ENCODE measurements at regions of chr1 and their contacts with region 1.

Region 1: DNA sequence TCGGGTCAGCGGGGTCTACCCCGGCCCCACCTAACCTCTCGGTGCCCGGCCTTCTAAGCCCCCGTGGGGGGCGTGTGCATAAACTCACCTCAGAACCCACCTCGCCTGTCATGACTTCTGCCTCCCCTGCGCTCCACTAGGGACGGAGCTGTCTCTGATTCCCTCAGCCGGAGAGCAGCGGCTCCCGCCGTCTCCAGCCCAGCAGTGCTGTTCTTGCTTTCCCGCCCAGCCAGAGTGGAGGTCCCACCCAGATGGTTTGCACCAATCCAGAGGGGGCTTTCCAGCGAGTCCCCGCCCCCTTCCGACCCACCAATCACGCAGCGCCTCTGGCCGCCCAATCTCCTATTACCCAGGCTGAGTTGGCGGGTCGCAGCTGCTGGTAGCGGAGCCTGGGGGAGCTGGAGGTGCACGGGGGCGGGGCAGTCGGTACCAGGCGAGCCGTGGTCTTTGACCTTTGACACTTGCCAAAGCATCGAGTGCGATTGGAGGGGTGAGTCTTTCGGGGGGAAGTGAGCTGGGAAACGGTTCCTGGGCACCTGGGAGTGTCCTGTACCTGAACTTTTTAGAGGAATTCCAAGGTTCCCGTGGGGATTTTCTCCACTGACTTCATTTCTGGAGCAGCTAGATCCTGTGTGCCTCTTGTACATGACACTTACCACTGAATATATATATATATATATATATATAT is at the start of gene CLSPN:
- DNase-seq: peak; percentile 87 to 96
- H3K4me3 ChIP-seq: peak within 1 kb of the TSS; percentile 60 to 93
- H3K27ac ChIP-seq: peak within 1 kb of the TSS; percentile 20 to 73
- H3K4me1 ChIP-seq: peaks cover 0 to 4% of the 10 kb centered on the region in 2 donors
- H3K27me3 ChIP-seq: no peaks in the 10 kb centered on the region
- CTCF ChIP-seq: no peak
- total RNA-seq, gene CLSPN: not detected

Region 2: GRCh38 chr1:35192853-35193664 is 576.8 kb before region 1 on chr1 and contains the start of gene SFPQ:
- intact Hi-C with region 1: loop called (anchors 10 kb)
- DNase-seq: peak; percentile 94 to 99
- H3K4me3 ChIP-seq: peak within 1 kb of the TSS; percentile 72 to 100
- H3K27ac ChIP-seq: peak within 1 kb of the TSS; percentile 99
- H3K4me1 ChIP-seq: peaks cover 5 to 22% of the 10 kb centered on the region in 2 donors
- H3K27me3 ChIP-seq: no peaks in the 10 kb centered on the region
- CTCF ChIP-seq: no peak
- total RNA-seq, gene SFPQ: 231 TPM

Region 3: DNA sequence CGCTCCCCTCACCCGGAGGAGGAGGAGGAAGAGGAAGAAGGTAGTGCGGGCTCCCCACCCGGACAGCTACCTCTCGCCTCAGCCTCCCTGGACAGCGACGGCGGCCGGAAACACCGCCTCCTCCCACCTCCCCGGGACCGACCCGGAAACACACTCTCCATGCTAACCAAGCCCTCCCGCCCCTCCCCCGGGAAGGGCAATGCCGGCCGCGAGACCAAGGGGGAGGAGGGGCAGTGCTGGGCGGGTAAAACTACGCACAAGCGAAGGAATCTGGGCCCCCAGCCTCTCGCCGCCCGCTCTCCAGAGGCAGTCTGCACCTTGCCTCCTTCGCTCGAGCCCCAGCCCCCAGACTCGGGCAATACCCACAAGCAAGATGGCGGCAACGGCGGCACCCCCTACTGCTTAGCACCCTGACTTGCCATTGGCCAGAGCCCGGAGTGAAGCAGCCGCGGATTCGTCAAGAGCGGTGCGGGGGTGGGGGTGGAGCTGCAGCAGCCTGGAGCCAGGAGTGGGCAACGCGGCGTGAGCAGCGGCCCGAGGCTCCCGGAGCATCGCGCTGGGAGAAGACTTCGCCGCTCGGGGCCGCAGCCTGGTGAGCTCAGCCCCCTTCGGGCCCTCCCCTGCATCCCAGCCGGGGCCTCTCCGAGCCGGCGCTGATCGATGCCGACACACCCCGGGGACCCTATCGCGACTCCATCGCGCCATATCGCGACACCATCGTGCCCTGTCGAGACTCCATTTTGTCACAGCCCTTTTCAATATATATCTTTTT is 212.4 kb before region 1 on chr1 and contains the starts of genes KIAA0319L and NCDN:
- intact Hi-C with region 1: loop called (anchors 5 kb)
- DNase-seq: peak; percentile 91 to 99
- H3K4me3 ChIP-seq: peak within 1 kb of the TSS; percentile 85 to 98
- H3K27ac ChIP-seq: peak within 1 kb of the TSS; percentile 95 to 97
- H3K4me1 ChIP-seq: peaks cover 4 to 46% of the 10 kb centered on the region in 2 donors
- H3K27me3 ChIP-seq: no peaks in the 10 kb centered on the region
- CTCF ChIP-seq: no peak
- total RNA-seq, gene KIAA0319L: 44.9 TPM
- total RNA-seq, gene NCDN: 20.1 TPM

Region 4: DNA sequence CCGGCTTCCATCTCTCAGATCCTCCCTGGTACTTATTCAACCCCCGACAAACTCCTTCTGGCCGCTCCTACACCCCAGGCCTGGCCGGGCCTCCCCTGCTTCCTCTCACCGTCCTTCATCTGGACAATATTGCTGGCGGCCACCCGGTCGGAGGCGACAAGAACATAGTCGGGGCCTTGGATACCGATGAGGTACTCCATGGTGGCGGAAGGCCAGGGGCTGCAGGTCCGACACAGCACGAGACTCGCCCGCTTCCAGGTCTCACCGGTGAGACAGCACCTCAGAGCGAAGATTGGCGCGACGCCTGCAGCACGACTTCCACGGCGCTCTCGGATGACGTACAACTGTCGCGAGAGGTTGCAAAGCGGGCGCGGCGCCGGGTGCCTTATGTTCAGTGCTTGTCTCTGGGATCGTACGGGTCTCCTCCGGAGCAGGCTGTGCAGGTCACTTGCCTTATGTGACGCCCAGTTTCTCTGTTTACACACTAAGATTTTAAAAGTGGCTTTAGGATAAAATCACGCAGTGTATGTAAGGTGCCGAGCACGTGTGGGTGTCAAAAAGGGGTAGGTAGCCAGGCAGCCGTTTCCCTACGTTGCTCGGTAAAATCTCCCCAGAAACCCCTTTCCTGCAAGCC is 128.6 kb before region 1 on chr1 and contains the start of gene PSMB2:
- intact Hi-C with region 1: loop called (anchors 1 kb)
- DNase-seq: peak; percentile 85 to 97
- H3K4me3 ChIP-seq: peak within 1 kb of the TSS; percentile 88 to 90
- H3K27ac ChIP-seq: peak within 1 kb of the TSS; percentile 87 to 91
- H3K4me1 ChIP-seq: peaks cover 3 to 28% of the 10 kb centered on the region in 2 donors
- H3K27me3 ChIP-seq: no peaks in the 10 kb centered on the region
- CTCF ChIP-seq: no peak
- total RNA-seq, gene PSMB2: 54.0 TPM

Region 5: GRCh38 chr1:35726450-35727433 is 43.2 kb before region 1 on chr1:
- intact Hi-C with region 1: loop called (anchors 2 kb)
- DNase-seq: no peak
- H3K4me3 ChIP-seq: no peak overlapping the region
- H3K27ac ChIP-seq: no peak overlapping the region
- H3K4me1 ChIP-seq: no peaks in the 10 kb centered on the region
- H3K27me3 ChIP-seq: no peaks in the 10 kb centered on the region
- CTCF ChIP-seq: peak; percentile 51 to 85 (median 80)